CD4-positive, alpha-beta memory T cell (primary cell): ENCODE measurements at regions of chr6 and their contacts with region 1.

Region 1: GRCh38 chr6:149648148-149649145 is at the start of gene KATNA1:
- DNase-seq: peak; percentile 83 to 87 (median 84)
- H3K4me3 ChIP-seq: peak within 1 kb of the TSS; percentile 61 to 84
- H3K4me3 Mint-ChIP-seq: peak within 1 kb of the TSS; percentile 82 to 94 (median 92)
- H3K27ac ChIP-seq: peak within 1 kb of the TSS; percentile 74
- H3K27ac Mint-ChIP-seq: peak within 1 kb of the TSS; percentile 85 to 95 (median 90)
- H3K4me1 ChIP-seq: peaks cover 35% of the 10 kb centered on the region
- H3K4me1 Mint-ChIP-seq: peaks cover 14 to 45% (median 25%) of the 10 kb centered on the region in 4 donors
- H3K27me3 ChIP-seq: no peaks in the 10 kb centered on the region
- H3K27me3 Mint-ChIP-seq: no peaks in the 10 kb centered on the region
- total RNA-seq, gene KATNA1: 18.2 to 21.4 TPM

Region 2: GRCh38 chr6:149580880-149581279 is 67.6 kb before region 1 on chr6:
- CTCF ChIA-PET with region 1: no interaction called
- POLR2A ChIA-PET with region 1: no interaction called
- intact Hi-C with region 1: no loop called
- DNase-seq: no peak
- H3K4me3 ChIP-seq: no peak overlapping the region
- H3K4me3 Mint-ChIP-seq: no peak overlapping the region
- H3K27ac ChIP-seq: no peak overlapping the region
- H3K27ac Mint-ChIP-seq: peak overlapping the region in 1 of 7 donors; percentile 70
- H3K4me1 ChIP-seq: no peaks in the 10 kb centered on the region
- H3K4me1 Mint-ChIP-seq: peaks cover 0 to 4% (median under 1%) of the 10 kb centered on the region in 4 donors
- H3K27me3 ChIP-seq: no peaks in the 10 kb centered on the region
- H3K27me3 Mint-ChIP-seq: no peaks in the 10 kb centered on the region

Region 3: DNA sequence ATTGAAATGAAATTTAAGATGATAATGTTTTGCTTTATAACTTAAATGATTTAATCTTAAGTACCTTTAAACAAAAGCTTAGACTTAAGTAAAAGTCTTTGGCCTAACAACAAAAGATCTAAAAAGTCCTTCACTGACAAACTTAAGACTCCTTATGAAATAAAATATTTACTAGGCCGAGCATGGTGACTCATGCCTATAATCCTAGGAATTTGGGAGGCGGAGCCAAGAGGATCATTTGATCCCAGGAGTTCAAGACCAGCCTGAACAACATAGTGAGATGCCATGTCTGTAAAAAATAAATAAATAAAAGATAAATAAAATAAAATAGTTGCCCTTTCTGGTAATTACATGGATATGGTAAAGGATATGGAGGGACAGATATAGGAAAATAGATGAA is 12.3 kb before region 1 on chr6:
- CTCF ChIA-PET with region 1: no interaction called
- POLR2A ChIA-PET with region 1: no interaction called
- intact Hi-C with region 1: no loop called
- DNase-seq: no peak
- H3K4me3 ChIP-seq: no peak overlapping the region
- H3K4me3 Mint-ChIP-seq: no peak overlapping the region
- H3K27ac ChIP-seq: no peak overlapping the region
- H3K27ac Mint-ChIP-seq: no peak overlapping the region
- H3K4me1 ChIP-seq: no peaks in the 10 kb centered on the region
- H3K4me1 Mint-ChIP-seq: peaks cover 4 to 10% (median 6%) of the 10 kb centered on the region in 4 donors
- H3K27me3 ChIP-seq: no peaks in the 10 kb centered on the region
- H3K27me3 Mint-ChIP-seq: no peaks in the 10 kb centered on the region

Region 4: DNA sequence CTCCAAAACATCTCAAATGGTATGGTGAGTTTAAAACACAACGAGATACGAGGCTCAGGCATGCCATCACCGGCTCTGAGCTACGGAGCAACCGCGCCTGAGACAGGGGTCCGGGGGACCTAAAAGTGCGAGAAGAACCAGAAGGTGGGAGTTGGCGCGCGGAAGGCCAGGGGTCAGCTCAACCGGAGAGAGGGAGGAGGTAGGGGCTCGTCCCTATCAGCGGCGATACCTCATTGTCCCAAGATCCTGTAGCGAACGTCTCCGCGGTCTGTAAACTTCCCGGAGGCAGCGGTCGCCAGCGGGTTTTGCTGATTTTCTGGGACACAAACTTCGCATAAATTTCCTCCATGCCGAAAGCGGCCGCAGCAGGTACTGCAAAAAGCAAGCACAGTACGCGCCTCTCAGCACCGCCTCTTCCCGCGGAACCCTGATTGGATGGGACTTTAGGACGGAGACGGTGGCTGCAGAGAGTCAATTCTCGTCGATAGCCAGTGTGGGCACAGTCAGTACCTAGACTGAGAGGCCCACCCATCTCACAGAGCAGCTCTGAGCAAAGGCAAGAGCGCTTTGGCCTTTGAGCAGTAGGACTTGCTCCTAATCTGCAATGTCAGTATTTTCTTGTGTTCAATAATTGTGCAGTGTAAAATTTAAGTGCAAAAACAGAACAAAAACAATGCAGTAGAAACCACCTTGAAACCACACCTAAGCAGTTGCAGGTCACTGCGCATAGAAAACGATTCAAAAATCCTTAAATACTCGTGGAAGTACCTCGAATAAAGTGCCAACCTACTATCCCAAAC is 97.9 kb after region 1 on chr6 and contains the start of gene NUP43:
- CTCF ChIA-PET with region 1: no interaction called
- POLR2A ChIA-PET with region 1: interaction called, 4 read pairs
- intact Hi-C with region 1: loop called (anchors 1 kb)
- DNase-seq: peak; percentile 89 to 92 (median 89)
- H3K4me3 ChIP-seq: peak within 1 kb of the TSS; percentile 87 to 90
- H3K4me3 Mint-ChIP-seq: peak within 1 kb of the TSS; percentile 92 to 99 (median 97)
- H3K27ac ChIP-seq: peak within 1 kb of the TSS; percentile 78
- H3K27ac Mint-ChIP-seq: peak within 1 kb of the TSS; percentile 88 to 97 (median 94)
- H3K4me1 ChIP-seq: peaks cover 36% of the 10 kb centered on the region
- H3K4me1 Mint-ChIP-seq: peaks cover 18 to 47% (median 31%) of the 10 kb centered on the region in 4 donors
- H3K27me3 ChIP-seq: no peaks in the 10 kb centered on the region
- H3K27me3 Mint-ChIP-seq: no peaks in the 10 kb centered on the region
- total RNA-seq, gene NUP43: 56.0 to 58.3 TPM

Region 5: DNA sequence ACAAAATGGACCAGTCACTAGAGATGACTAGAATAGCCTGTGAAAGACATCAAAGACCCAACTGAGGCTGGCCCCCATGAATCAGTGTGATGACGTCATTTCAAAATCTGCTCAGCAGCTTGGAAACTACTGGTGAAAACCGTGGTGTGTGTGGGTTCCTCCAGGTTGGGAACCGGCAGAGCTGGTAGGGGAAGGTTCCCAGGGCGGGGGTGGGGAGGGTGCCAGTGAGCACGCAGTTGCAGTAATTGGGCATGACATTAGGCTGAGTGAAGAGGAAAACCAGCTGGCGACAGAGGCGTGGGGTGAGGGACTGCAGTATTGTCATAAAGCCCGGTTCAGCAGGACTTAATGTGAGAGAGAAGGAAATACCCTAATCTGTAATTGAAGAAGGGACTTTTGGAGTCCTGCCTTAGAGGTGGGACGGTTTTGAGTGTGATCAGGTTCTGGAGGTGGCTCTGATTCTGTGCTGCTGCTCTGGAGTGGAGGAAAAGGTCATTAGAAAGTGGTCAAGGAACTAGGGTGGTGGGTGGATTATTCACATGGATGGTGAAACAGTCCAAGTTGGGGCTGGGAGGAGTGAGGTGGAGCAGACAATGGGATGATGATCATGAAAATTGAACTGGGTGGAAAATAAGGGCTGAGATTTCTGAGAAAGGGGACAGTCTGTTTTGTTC is 1165.0 kb after region 1 on chr6:
- CTCF ChIA-PET with region 1: no interaction called
- POLR2A ChIA-PET with region 1: no interaction called
- intact Hi-C with region 1: no loop called
- DNase-seq: peak in 1 of 5 donors; percentile 44
- H3K4me3 ChIP-seq: no peak overlapping the region
- H3K4me3 Mint-ChIP-seq: no peak overlapping the region
- H3K27ac ChIP-seq: no peak overlapping the region
- H3K27ac Mint-ChIP-seq: peak overlapping the region in 4 of 7 donors; percentile 6 to 58 (median 28)
- H3K4me1 ChIP-seq: no peaks in the 10 kb centered on the region
- H3K4me1 Mint-ChIP-seq: peaks cover 0 to 15% (median 5%) of the 10 kb centered on the region in 4 donors
- H3K27me3 ChIP-seq: no peaks in the 10 kb centered on the region
- H3K27me3 Mint-ChIP-seq: peaks cover 3 to 7% of the 10 kb centered on the region in 2 donors